ENCODE measurements at regions of chr4 and their contacts with region 1.

Region 1: DNA sequence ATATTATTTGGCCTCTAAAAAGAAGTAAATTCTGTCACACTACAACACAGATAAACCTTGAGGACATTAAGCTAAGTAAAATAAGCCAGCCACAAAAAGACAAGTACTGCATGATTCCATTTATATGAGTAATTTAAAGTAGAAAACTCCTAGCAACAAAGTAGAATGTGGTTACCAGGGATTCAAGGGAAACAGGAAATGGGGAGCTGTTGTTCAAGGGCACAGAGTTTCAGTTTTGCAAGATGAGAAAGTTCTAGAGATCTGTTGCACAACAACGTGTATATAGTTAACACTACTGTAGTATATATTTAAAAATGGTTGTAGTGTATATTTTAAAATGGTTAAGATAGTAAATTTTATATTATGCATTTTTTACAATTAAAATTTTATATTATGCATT is 25.4 kb downstream of the SEC31A start:
- DNase-seq: no peak
- H3K4me3 ChIP-seq: no peak overlapping the region
- CTCF ChIP-seq: no peak
- POLR2A ChIP-seq: no peak

Region 2: GRCh38 chr4:81421346-81422218 is 1444.0 kb before region 1 on chr4:
- intact Hi-C with region 1: loop called (anchors 10 kb)
- DNase-seq: peak in 1 of 2 donors; percentile 78
- H3K4me3 ChIP-seq: no peak overlapping the region
- CTCF ChIP-seq: no peak
- POLR2A ChIP-seq: no peak

Measured in lower leg skin (tissue), 4 donors.